Activated CD4-positive, alpha-beta memory T cell treated with anti-CD3 and anti-CD28 coated beads for 36 hours (primary cell): ENCODE measurements at regions of chr18 and their contacts with region 1.

Region 1: DNA sequence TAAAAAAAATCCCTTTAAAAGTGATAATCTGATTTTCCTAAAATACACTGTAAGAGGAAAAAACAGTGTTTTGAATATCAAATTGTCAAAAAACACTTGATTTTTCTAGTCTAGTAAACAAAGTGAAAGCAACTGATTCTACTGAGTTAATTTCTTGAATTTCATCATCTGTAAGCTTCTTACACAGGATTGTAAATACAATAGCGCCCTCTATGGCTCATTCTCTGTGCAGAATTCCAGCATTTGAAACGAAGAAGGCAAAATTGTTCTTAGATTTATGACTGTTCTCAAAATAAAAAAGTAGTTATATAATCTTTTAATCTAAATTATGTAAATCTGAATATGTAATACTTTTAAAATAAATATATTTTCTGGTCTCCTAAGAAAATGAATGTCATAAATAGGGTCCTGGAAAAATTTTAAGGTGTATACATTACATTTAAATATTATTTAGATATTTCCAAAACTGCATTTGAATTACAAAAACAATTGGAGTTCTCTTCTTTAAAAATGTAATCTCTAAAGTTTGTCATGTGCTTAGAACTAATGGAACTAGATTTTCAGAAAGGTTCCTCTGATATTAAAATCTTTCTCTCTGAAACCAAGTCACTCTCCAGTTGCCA is 176.9 kb upstream of the MC4R start:
- DNase-seq: no peak
- H3K4me3 Mint-ChIP-seq: no peak overlapping the region
- H3K27ac Mint-ChIP-seq: no peak overlapping the region
- H3K4me1 Mint-ChIP-seq: no peaks in the 10 kb centered on the region
- H3K27me3 Mint-ChIP-seq: no peaks in the 10 kb centered on the region

Region 2: GRCh38 chr18:59459369-59460079 is 1089.9 kb before region 1 on chr18:
- CTCF ChIA-PET with region 1: interaction called, 6 read pairs
- POLR2A ChIA-PET with region 1: no interaction called
- intact Hi-C with region 1: loop called (anchors 10 kb)
- DNase-seq: no peak
- H3K4me3 Mint-ChIP-seq: no peak overlapping the region
- H3K27ac Mint-ChIP-seq: no peak overlapping the region
- H3K4me1 Mint-ChIP-seq: no peaks in the 10 kb centered on the region
- H3K27me3 Mint-ChIP-seq: peaks cover 5% of the 10 kb centered on the region

Region 3: GRCh38 chr18:59697236-59697932 is 852.1 kb before region 1 on chr18 and contains the start of gene CCBE1:
- CTCF ChIA-PET with region 1: interaction called, 3 read pairs
- POLR2A ChIA-PET with region 1: no interaction called
- intact Hi-C with region 1: loop called (anchors 10 kb)
- DNase-seq: peak; percentile 61
- H3K4me3 Mint-ChIP-seq: no peak within 1 kb of the TSS
- H3K27ac Mint-ChIP-seq: no peak within 1 kb of the TSS
- H3K4me1 Mint-ChIP-seq: peaks cover 9% of the 10 kb centered on the region
- H3K27me3 Mint-ChIP-seq: peaks cover 42% of the 10 kb centered on the region
- total RNA-seq, gene CCBE1: 0.36 TPM in 1 of 2 experiments, not detected in the other

Region 4: GRCh38 chr18:59988098-59988706 is 561.2 kb before region 1 on chr18:
- CTCF ChIA-PET with region 1: interaction called, 22 read pairs
- POLR2A ChIA-PET with region 1: no interaction called
- intact Hi-C with region 1: loop called (anchors 1 kb)
- DNase-seq: peak; percentile 64
- H3K4me3 Mint-ChIP-seq: no peak overlapping the region
- H3K27ac Mint-ChIP-seq: no peak overlapping the region
- H3K4me1 Mint-ChIP-seq: no peaks in the 10 kb centered on the region
- H3K27me3 Mint-ChIP-seq: peaks cover 12% of the 10 kb centered on the region

Region 5: DNA sequence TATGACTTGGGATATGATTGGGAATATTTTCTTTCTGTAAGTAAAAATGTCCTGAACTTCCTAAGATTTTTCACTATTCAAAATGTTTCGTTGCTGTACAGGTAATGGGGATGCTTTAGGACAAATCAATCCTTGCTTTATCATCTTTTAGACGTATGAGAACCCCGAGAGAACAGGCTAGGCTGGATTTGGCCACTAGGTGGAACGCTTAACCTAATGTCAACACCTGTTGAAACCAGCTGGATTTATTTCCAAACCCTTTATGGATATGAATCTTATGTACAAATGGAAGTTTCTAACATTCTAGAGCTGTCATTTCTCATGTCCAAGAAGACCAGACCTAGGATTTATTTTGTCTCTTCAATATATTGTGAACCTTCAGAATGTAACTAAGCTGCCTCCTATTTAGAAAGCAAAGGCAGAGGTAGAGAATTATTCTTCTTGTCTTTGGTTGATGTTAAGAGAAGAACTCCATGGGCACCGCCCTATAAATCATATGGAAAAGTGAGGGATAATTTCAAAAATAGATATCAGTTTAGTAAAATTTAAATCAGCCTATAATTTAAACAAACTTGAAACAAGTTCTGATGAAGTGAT is 553.0 kb before region 1 on chr18:
- CTCF ChIA-PET with region 1: interaction called, 7 read pairs
- POLR2A ChIA-PET with region 1: no interaction called
- intact Hi-C with region 1: loop called (anchors 1 kb)
- DNase-seq: peak; percentile 24
- H3K4me3 Mint-ChIP-seq: no peak overlapping the region
- H3K27ac Mint-ChIP-seq: no peak overlapping the region
- H3K4me1 Mint-ChIP-seq: no peaks in the 10 kb centered on the region
- H3K27me3 Mint-ChIP-seq: peaks cover 19% of the 10 kb centered on the region